ENCODE measurements at regions of chr17 and their contacts with region 1.

Region 1: GRCh38 chr17:17001874-17002520 is 30.1 kb upstream of the TNFRSF13B start:
- DNase-seq: peak; percentile 46 to 81 (median 74)
- ATAC-seq: peak; percentile 85
- H3K4me3 ChIP-seq: no peak overlapping the region
- H3K4me3 Mint-ChIP-seq: no peak overlapping the region
- H3K27ac ChIP-seq: no peak overlapping the region
- H3K27ac Mint-ChIP-seq: no peak overlapping the region
- H3K4me1 ChIP-seq: peaks cover 3 to 4% of the 10 kb centered on the region in 2 donors
- H3K4me1 Mint-ChIP-seq: peaks cover 0 to 5% (median 0%) of the 10 kb centered on the region in 7 donors
- H3K27me3 ChIP-seq: no peaks in the 10 kb centered on the region
- H3K27me3 Mint-ChIP-seq: peaks cover 0 to 7% (median 0%) of the 10 kb centered on the region in 5 donors

Region 2: DNA sequence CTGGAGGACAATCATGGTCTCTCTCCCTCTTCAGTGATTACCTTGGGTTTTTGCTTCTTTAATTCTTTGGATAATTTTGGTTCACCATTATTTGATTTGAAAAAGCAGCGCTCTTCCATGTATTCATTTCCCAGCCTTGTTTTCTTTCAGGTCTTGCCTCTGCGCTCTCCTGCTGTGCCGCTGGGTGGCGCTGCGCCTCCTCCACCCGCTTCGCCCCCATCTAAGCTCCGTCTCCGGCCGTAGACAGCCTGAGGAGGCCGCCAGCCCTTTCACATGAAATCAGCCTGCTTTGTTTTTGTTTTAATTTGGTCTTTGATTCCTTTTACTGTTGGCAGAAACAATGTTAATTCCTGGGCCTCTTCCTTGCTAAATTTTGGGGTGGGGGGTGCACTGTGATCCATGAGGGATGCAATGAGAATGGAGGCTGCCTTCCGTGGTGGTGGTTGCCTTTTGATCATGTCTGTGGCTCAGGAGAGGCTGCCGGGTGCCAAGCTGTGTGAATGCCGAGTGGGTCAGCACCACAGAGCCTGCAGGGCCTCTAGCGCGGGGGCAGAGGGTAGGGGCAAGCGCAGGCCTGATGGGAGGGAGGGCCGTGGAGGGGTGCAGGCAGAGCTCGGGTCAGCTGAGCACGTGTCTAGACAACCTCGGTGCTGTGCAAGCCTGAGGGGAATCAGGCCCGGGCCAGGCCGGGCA is 140.0 kb after region 1 on chr17:
- CTCF ChIA-PET with region 1: no interaction called
- POLR2A ChIA-PET with region 1: no interaction called
- intact Hi-C with region 1: loop called (anchors 1 kb)
- DNase-seq: peak; percentile 35 to 64 (median 54)
- ATAC-seq: peak; percentile 74
- H3K4me3 ChIP-seq: no peak overlapping the region
- H3K4me3 Mint-ChIP-seq: peak overlapping the region in 2 of 10 donors; percentile 2 to 3
- H3K27ac ChIP-seq: no peak overlapping the region
- H3K27ac Mint-ChIP-seq: peak overlapping the region in 7 of 9 donors; percentile 5 to 85 (median 63)
- H3K4me1 ChIP-seq: peaks cover 0 to 2% of the 10 kb centered on the region in 2 donors
- H3K4me1 Mint-ChIP-seq: peaks cover 8 to 24% (median 9%) of the 10 kb centered on the region in 7 donors
- H3K27me3 ChIP-seq: no peaks in the 10 kb centered on the region
- H3K27me3 Mint-ChIP-seq: no peaks in the 10 kb centered on the region

Region 3: GRCh38 chr17:17206124-17206912 is 204.3 kb after region 1 on chr17 and contains the start of gene PLD6:
- CTCF ChIA-PET with region 1: interaction called, 3 read pairs
- POLR2A ChIA-PET with region 1: no interaction called
- intact Hi-C with region 1: loop called in 1 of 2 experiments (anchors 5 kb)
- DNase-seq: peak; percentile 88 to 96 (median 93)
- ATAC-seq: peak; percentile 92
- H3K4me3 ChIP-seq: peak within 1 kb of the TSS; percentile 68
- H3K4me3 Mint-ChIP-seq: peak within 1 kb of the TSS; percentile 87 to 93 (median 89)
- H3K27ac ChIP-seq: peak within 1 kb of the TSS; percentile 70
- H3K27ac Mint-ChIP-seq: peak within 1 kb of the TSS; percentile 75 to 96 (median 91)
- H3K4me1 ChIP-seq: peaks cover 17 to 30% of the 10 kb centered on the region in 2 donors
- H3K4me1 Mint-ChIP-seq: peaks cover 12 to 32% (median 19%) of the 10 kb centered on the region in 7 donors
- H3K27me3 ChIP-seq: no peaks in the 10 kb centered on the region
- H3K27me3 Mint-ChIP-seq: no peaks in the 10 kb centered on the region
- total RNA-seq, gene PLD6: 6.2 to 13.9 (median 12.1) TPM

Region 4: GRCh38 chr17:17641621-17642409 is 639.8 kb after region 1 on chr17:
- CTCF ChIA-PET with region 1: interaction called, 4 read pairs
- POLR2A ChIA-PET with region 1: no interaction called
- intact Hi-C with region 1: loop called (anchors 2 to 10 kb)
- DNase-seq: peak; percentile 49 to 84 (median 72)
- ATAC-seq: peak; percentile 91
- H3K4me3 ChIP-seq: no peak overlapping the region
- H3K4me3 Mint-ChIP-seq: no peak overlapping the region
- H3K27ac ChIP-seq: no peak overlapping the region
- H3K27ac Mint-ChIP-seq: peak overlapping the region in 1 of 9 donors; percentile 65
- H3K4me1 ChIP-seq: no peaks in the 10 kb centered on the region
- H3K4me1 Mint-ChIP-seq: peaks cover 0 to 5% (median 0%) of the 10 kb centered on the region in 7 donors
- H3K27me3 ChIP-seq: no peaks in the 10 kb centered on the region
- H3K27me3 Mint-ChIP-seq: peaks cover 0 to 2% (median 0%) of the 10 kb centered on the region in 5 donors